Tibial artery (tissue), 4 donors: ENCODE measurements at regions of chr2 and their contacts with region 1.

Region 1: DNA sequence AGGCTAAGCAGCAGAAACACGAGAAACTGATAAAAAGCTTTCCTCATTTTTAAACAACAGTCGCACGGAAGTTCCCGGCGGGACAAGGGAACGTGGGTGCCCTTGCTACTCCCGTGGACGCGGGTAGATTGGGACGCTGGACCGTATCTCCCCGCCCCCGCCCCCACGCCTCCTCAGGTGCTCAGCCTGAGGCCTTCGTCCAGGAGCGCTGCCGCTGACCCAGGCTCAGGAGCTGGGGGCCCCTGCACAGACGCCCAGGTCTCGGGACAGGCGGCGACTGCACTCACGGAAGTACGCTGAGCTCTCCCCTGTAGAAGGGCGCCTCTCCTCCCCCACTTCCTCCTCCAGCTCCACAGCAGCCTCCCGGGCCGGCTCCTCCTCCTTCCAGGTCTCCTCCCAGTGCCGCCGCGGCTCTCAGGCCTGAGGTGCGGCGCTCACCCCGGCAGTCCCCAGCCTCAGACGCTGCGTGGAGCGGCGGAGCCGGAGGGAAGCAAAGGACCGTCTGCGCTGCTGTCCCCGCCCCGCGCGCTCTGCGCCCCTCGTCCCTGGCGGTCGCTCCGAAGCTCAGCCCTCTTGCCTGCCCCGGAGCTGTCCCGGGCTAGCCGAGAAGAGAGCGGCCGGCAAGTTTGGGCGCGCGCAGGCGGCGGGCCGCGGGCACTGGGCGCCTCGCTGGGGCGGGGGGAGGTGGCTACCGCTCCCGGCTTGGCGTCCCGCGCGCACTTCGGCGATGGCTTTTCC is at the start of gene ITGAV:
- DNase-seq: peak; percentile 95 to 96
- H3K4me3 ChIP-seq: peak within 1 kb of the TSS; percentile 81 to 85
- H3K27ac ChIP-seq: peak within 1 kb of the TSS; percentile 95 to 98
- H3K4me1 ChIP-seq: peaks cover 0 to 41% (median 23%) of the 10 kb centered on the region in 4 donors
- H3K27me3 ChIP-seq: no peaks in the 10 kb centered on the region
- CTCF ChIP-seq: no peak

Region 2: DNA sequence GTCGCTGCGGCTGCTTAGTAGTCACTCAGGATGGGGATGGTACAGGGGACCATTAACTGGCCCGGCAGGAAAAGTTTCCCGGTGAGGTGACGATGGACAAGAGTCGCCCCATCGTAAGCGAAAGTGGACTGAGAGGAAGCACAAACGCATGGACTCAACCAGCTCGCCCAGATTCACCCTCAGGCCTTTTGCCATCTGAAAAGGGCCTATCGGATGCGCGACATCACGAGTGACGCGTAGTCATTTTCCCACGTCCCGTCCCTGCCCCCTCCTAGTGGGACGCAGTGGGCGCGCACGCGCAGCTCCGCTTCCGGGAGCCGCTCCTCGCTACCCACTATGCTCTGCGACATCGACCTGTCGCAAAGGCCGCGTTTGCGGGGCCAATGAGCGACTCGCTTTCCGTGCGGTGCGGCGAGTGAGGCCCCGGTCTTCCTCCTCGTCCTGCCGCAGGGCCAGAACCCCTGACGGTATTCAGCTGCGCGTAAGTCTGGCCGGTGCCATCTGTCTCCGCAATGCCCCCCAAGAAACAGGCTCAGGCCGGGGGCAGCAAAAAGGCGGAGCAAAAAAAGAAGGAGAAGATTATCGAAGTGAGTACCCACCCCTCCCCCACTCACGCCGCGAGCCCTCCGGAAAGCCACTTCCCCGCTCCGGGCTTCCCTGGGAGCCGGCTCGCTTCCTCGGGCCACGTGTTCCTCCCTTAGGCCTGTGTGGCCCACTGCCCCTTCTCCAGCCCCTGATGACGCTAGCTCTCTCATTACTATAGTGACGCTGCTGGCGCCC is 103.7 kb before region 1 on chr2 and contains the start of gene ZC3H15:
- intact Hi-C with region 1: loop called (anchors 5 kb)
- DNase-seq: peak; percentile 95 to 99
- H3K4me3 ChIP-seq: peak within 1 kb of the TSS; percentile 86 to 97
- H3K27ac ChIP-seq: peak within 1 kb of the TSS; percentile 87 to 88
- H3K4me1 ChIP-seq: peaks cover 0 to 53% (median 28%) of the 10 kb centered on the region in 4 donors
- H3K27me3 ChIP-seq: no peaks in the 10 kb centered on the region
- CTCF ChIP-seq: peak in 1 of 2 experiments; percentile 5